Activated CD8-positive, alpha-beta T cell treated with anti-CD3 and anti-CD28 coated beads for 36 hours (primary cell): ENCODE measurements at regions of chr19 and their contacts with region 1.

Region 1: DNA sequence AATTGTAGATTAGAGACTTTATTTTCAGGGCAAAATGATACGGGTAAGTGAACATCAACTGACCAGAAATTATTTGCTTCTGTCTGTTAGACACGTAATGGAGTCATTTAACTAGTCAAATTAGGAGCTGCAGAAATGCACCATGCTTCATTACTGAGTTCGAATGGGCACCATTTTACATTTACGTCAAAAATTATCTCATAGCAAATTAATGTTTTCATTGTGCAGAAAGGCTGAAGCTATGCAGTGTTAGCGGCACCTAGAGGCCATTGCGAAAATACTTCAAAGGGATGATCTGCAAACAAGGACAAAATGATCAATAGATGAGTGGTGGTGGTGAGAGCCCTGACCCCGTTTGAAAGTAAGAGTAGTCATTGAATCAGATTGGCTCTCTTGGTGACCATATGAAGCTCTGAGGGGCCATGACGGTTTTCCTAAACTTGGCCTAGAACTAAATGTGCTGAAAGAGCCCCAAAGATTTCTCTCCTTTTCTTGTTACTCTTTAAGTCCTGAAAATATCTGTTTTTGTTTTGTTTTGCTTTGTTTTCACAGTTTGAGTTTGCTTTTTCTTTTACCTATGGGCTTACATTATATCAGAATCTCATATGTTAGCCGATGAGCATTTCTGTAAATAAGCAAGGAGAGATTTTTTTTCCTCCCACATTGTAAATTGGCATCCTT is 277.9 kb downstream of the ZNF536 start:
- DNase-seq: peak; percentile 63
- ATAC-seq: no peak
- H3K4me3 Mint-ChIP-seq: no peak overlapping the region
- H3K27ac Mint-ChIP-seq: no peak overlapping the region
- H3K4me1 Mint-ChIP-seq: no peaks in the 10 kb centered on the region
- H3K27me3 Mint-ChIP-seq: peaks cover 21% of the 10 kb centered on the region
- CTCF ChIP-seq: peak; percentile 79

Region 2: GRCh38 chr19:30227661-30228428 is 422.2 kb before region 1 on chr19:
- CTCF ChIA-PET with region 1: no interaction called
- POLR2A ChIA-PET with region 1: no interaction called
- intact Hi-C with region 1: loop called (anchors 10 kb)
- DNase-seq: peak; percentile 72
- ATAC-seq: peak; percentile 83
- H3K4me3 Mint-ChIP-seq: peak overlapping the region; percentile 73
- H3K27ac Mint-ChIP-seq: no peak overlapping the region
- H3K4me1 Mint-ChIP-seq: peaks cover 20% of the 10 kb centered on the region
- H3K27me3 Mint-ChIP-seq: peaks cover 63% of the 10 kb centered on the region
- CTCF ChIP-seq: peak; percentile 76

Region 3: DNA sequence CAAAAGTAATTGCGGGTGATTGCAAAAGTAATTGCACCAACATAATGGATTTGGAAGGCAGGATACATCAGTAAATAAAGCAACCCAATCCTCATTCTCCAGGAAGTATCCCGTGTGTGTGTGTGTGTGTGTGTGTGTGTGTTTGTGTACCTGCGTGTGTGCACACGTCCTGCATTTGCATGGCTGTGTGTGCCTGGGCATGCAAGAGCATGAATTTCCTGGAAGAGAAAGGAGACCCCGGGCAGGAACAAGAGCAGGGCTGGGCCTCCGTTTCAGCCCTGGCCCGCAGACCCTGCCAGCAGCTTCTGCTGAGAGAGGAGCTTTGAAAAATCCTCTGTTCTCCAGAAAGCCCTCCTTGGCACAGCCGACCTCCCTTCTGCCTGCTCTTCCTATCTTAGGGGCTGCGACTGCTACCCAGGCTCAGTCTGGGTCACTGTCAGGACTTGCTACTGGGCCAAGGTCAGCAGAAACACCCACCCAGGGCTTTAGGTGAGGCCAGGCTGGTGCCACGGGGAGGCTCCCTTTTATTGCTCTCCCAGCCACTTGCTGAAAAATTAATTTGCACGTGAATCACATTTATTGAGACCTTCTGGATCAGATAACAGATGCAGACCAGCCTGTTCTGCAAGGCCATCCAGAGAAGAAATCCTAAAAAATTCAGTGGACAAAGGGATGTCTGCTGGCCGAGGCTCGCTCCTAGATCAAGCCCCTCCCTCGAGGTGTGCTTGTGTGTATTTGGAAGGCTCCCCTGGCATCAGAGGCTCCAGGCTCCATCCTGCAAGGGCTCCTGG is 19.6 kb before region 1 on chr19:
- CTCF ChIA-PET with region 1: no interaction called
- POLR2A ChIA-PET with region 1: no interaction called
- intact Hi-C with region 1: no loop called
- DNase-seq: no peak
- ATAC-seq: no peak
- H3K4me3 Mint-ChIP-seq: no peak overlapping the region
- H3K27ac Mint-ChIP-seq: no peak overlapping the region
- H3K4me1 Mint-ChIP-seq: no peaks in the 10 kb centered on the region
- H3K27me3 Mint-ChIP-seq: peaks cover 1% of the 10 kb centered on the region
- CTCF ChIP-seq: no peak